Dorsolateral prefrontal cortex (tissue), 120 donors: ENCODE measurements at regions of chr2 and their contacts with region 1.

Region 1: DNA sequence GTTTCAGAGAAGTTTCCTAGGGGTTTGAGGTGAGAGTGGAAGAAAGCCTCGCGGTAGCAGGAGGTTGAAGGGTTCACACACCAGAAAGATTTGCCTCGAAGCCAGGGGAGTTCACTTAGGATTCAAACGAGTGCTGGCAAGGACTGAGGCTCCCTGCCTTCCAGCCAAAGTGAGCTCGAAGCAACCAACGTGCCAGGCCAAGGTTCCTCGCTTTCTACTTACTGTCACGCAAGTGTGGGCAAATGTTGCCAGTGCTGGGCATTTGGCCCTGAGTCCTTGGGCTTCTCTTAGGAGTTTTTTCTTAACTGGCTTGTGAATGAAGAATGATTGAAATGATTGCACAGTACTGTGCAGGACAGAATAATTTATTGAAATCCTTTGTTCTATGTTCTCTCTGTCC is 53.6 kb downstream of the TMEM178A start:
- DNase-seq: peak in 7 of 10 donors; percentile 45 to 70 (median 58)
- H3K4me3 ChIP-seq: no peak overlapping the region
- H3K27ac ChIP-seq: peak overlapping the region in 30 of 59 donors; percentile 0 to 70 (median 30)
- H3K27me3 ChIP-seq: peaks cover 0 to 20% (median 0%) of the 10 kb centered on the region in 45 donors
- CTCF ChIP-seq: no peak

Region 2: GRCh38 chr2:39642051-39642742 is 77.1 kb before region 1 on chr2:
- intact Hi-C with region 1: loop called in 1 of 2 experiments (anchors 5 kb)
- DNase-seq: peak in 6 of 10 donors; percentile 23 to 64 (median 55)
- H3K4me3 ChIP-seq: peak overlapping the region in 22 of 59 donors; percentile 2 to 44 (median 16)
- H3K27ac ChIP-seq: peak overlapping the region in 30 of 59 donors; percentile 2 to 83 (median 45)
- H3K27me3 ChIP-seq: no peaks in the 10 kb centered on the region
- CTCF ChIP-seq: no peak